Calu3 (cell line): ENCODE measurements at regions of chr12 and their contacts with region 1.

Region 1: DNA sequence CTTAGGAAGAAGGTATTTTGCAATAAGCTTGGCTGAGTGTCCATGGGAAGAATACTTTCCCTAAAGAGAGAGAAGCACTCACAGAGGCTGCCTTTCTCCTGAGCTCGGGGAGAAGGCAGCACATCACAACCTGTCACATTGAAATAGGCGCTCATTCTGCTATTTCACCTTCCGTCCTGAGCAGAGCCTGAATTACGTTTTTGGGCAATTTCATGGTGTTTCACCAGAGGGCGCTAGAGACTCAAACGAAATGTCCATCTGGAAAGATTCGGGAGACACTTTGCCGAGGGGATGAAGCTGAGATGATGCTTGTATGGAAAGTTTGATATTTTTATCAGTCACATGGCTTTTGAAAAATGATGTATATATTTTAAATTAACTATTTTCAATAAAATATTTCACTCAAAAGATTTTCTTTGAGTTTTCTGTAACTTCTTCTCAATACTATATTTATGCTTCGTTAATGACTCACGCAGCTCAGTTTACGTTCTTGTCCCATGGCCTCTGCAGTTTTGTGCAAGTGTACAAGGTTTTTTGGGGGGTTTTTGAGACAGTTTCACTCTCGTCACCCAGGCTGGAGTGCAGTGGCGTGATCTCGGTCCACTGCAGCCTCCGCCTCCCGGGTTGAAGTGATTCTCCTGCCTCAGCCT is 17.4 kb upstream of the B4GALNT3 start:
- DNase-seq: peak; percentile 61
- H3K4me3 Mint-ChIP-seq: no peak overlapping the region
- H3K27ac Mint-ChIP-seq: no peak overlapping the region
- H3K4me1 Mint-ChIP-seq: no peaks in the 10 kb centered on the region
- H3K27me3 Mint-ChIP-seq: no peaks in the 10 kb centered on the region
- CTCF ChIP-seq: peak; percentile 59

Region 2: GRCh38 chr12:546921-547845 is 104.8 kb after region 1 on chr12:
- CTCF ChIA-PET with region 1: interaction called, 6 read pairs
- intact Hi-C with region 1: loop called (anchors 1 kb)
- DNase-seq: peak; percentile 81
- H3K4me3 Mint-ChIP-seq: no peak overlapping the region
- H3K27ac Mint-ChIP-seq: no peak overlapping the region
- H3K4me1 Mint-ChIP-seq: peaks cover 15% of the 10 kb centered on the region
- H3K27me3 Mint-ChIP-seq: peaks cover 30% of the 10 kb centered on the region
- CTCF ChIP-seq: peak; percentile 99